ENCODE measurements at regions of chrX and their contacts with region 1.

Region 1: DNA sequence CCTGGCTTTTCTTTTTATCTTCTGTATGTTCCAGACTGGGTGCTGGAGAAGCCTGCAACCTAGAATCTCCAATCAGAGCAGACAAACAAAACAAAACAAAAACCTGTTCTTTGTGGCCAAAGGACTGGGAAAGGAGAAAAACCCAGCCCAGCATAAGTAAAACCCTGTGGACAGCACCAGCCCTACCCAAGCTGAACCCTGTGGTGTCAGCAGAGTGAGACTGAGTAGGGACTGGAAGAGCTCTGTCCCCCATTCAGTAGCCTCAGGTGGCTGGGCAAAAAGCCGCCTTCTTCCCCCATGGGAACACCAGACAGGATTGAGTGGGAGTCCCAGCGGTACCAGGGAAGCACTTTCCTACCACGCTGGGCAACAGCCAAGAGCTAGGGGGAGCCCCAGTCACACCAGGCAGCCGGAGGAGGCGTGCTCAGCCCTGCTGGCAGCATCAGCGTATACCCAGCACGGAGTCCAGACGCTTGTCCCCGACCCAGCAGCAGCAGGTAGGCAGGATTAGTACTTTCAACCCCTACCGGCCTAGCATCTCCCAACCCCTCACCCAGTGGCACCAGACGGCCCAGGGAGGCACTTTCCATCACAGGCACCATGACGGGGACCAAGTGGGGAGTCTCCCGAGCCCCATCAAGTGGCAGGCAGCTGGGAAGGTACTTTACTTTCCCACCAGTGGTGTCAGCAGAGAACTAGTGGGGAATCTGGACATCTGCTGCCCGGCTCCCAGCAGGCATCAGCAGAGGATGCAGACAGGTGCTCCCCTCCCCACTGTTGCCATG is 8.6 kb upstream of the JADE3 start:
- DNase-seq: peak; percentile 80 to 83
- ATAC-seq: peak; percentile 100
- H3K4me3 ChIP-seq: peak overlapping the region; percentile 46
- H3K27ac ChIP-seq: peak overlapping the region; percentile 53 to 78; a peak in 3 of 6 replicates
- H3K4me1 ChIP-seq: 0 out of 3 replicates have a peak, but pooled peaks cover 5% of the 10 kb centered on the region
- CTCF ChIP-seq: peak; percentile 90
- EP300 ChIP-seq: no peak
- POLR2A ChIP-seq: no peak
- RAD21 ChIP-seq: peak; percentile 76 to 86

Region 2: GRCh38 chrX:46376246-46376885 is 527.3 kb before region 1 on chrX:
- CTCF ChIA-PET with region 1: no interaction called
- POLR2A ChIA-PET with region 1: no interaction called
- DNase-seq: peak; percentile 59 to 85
- ATAC-seq: peak; percentile 95 to 96
- H3K4me3 ChIP-seq: no peak overlapping the region
- H3K27ac ChIP-seq: peak overlapping the region; percentile 75 to 95
- H3K4me1 ChIP-seq: peaks cover 36% of the 10 kb centered on the region
- CTCF ChIP-seq: peak; percentile 73
- EP300 ChIP-seq: no peak
- POLR2A ChIP-seq: no peak
- RAD21 ChIP-seq: peak; percentile 90 to 95

Region 3: DNA sequence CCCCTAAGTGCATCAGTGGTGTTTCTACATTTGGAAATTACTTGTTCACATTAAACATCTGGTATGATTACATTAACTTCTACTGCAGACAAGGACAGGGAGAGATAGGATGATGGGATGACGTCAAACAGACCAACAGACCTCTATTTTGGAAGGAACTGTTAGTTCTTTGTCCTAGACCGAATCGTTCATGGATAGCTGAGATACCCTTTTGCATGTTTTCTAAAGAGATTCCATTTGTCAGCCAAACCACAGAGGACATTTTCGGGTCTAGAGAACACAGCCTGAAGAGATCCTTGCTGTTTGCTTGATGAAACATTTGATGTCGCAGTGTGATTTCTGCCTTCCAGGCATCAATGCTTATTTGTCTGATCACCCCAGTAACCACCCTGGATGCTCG is 302.4 kb before region 1 on chrX:
- CTCF ChIA-PET with region 1: no interaction called
- POLR2A ChIA-PET with region 1: no interaction called
- DNase-seq: no peak
- ATAC-seq: no peak
- H3K4me3 ChIP-seq: no peak overlapping the region
- H3K27ac ChIP-seq: no peak overlapping the region
- H3K4me1 ChIP-seq: peaks cover 5% of the 10 kb centered on the region; the same call in 1 of the 3 replicates
- CTCF ChIP-seq: no peak
- EP300 ChIP-seq: no peak
- POLR2A ChIP-seq: no peak
- RAD21 ChIP-seq: no peak

Region 4: GRCh38 chrX:46737473-46737872 is 166.2 kb before region 1 on chrX:
- CTCF ChIA-PET with region 1: no interaction called
- POLR2A ChIA-PET with region 1: no interaction called
- DNase-seq: no peak
- ATAC-seq: no peak
- H3K4me3 ChIP-seq: no peak overlapping the region
- H3K27ac ChIP-seq: no peak overlapping the region
- H3K4me1 ChIP-seq: no peaks in the 10 kb centered on the region
- CTCF ChIP-seq: no peak
- EP300 ChIP-seq: no peak
- POLR2A ChIP-seq: no peak
- RAD21 ChIP-seq: no peak

Region 5: DNA sequence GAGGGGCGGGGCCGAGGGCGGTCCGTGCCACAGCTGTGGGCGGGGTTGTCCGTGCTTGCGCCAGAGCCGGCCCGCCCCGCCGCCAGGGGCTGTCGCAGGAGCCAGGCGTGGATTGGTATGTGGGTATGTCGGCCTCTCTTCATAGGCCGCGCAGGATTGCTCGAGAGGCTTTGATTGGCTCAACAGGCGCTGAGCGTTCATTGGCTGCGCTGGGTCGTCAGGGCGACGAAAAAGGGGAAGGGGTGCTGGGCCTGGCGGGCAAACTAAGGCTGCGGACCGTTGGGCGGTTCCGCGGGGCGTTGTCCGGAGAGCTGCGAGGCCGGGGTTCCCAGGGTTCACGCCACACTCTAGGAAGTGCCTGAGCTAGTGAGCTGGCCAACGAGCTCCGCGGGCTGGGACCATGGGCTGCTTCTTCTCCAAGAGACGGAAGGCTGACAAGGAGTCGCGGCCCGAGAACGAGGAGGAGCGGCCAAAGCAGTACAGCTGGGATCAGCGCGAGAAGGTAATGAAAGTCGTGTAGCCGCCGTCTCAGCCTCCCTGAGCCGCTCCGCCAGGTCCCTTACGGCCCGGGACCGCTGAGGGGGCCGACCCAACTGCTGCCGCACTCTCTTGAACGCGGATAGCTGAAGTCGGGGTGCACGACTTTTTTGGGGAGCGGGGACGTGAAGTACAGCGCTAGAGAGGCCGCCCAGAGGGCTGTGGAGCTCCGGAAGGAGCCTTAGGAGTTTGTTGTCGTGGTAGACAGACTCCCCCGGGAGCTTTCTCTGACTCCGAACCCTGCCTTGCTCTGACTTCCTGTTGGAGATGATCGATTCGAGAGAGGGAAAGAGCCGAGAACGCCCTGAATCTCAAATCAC is 66.7 kb before region 1 on chrX and contains the start of gene RP2:
- CTCF ChIA-PET with region 1: interaction called, 11 read pairs
- POLR2A ChIA-PET with region 1: no interaction called
- DNase-seq: peak; percentile 78 to 96
- ATAC-seq: peak; percentile 99
- H3K4me3 ChIP-seq: peak within 1 kb of the TSS; percentile 74
- H3K27ac ChIP-seq: peak within 1 kb of the TSS; percentile 80 to 90
- H3K4me1 ChIP-seq: peaks cover 32% of the 10 kb centered on the region
- CTCF ChIP-seq: no peak
- EP300 ChIP-seq: no peak
- POLR2A ChIP-seq: peak; percentile 73
- RAD21 ChIP-seq: no peak
- polyA plus RNA-seq, gene RP2: 13.8 and 14.8 TPM in 2 replicates

Region 6: GRCh38 chrX:46873746-46874145 is 29.9 kb before region 1 on chrX:
- CTCF ChIA-PET with region 1: interaction called, 11 read pairs
- POLR2A ChIA-PET with region 1: no interaction called
- DNase-seq: no peak
- ATAC-seq: no peak
- H3K4me3 ChIP-seq: no peak overlapping the region
- H3K27ac ChIP-seq: no peak overlapping the region
- H3K4me1 ChIP-seq: peaks cover 8% of the 10 kb centered on the region
- CTCF ChIP-seq: no peak
- EP300 ChIP-seq: no peak
- POLR2A ChIP-seq: no peak
- RAD21 ChIP-seq: no peak

Region 7: DNA sequence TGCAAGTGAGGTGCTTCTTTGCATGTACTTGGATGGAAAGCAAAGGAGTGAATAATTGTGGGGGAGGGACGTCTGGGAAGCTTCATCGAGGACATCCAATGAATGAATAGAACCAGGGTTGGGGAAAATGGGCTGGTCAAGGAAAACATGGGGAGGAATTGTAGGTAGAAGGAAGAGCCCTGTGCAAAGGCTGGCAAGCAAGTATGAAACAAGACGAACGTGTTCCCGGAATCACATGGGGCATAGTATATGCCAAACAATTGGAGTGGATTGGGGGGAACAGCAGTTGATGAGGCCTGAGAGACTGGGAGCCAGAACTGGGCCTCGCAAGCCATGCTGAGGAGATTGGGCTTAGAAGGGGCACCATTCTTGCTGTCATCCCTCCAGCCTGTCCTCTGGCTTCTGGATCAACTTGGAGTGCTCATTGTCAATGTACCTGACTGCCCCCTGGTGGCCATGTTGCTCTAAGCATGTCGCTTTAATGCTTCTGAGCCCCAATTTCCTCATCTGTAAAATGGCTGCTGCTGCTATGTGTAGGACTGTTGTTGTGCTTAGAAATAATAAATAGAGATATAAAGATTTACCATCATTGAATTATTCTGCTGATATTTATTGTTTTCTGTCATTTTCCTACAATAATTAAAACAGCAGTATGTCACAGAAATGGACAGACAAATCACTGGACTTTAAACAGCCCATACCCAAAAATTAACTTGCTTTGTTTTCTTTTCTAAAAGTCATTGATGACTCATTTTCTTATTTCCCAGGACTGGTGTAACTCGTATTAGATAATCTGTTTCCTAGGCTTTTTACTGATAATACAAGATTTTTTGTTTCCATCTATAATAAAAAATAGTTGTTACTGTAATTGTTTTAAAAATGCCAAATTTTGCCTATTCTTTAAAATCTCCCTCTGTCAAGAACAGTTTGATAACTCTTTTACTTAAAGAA is 75.0 kb after region 1 on chrX:
- CTCF ChIA-PET with region 1: interaction called, 17 read pairs
- POLR2A ChIA-PET with region 1: no interaction called
- DNase-seq: peak; percentile 51 to 89
- ATAC-seq: peak; percentile 90 to 95
- H3K4me3 ChIP-seq: 0 out of 3 replicates have a peak overlapping the region, but pooled peaks have one; percentile 21
- H3K27ac ChIP-seq: peak overlapping the region; percentile 81 to 86
- H3K4me1 ChIP-seq: peaks cover 24% of the 10 kb centered on the region
- CTCF ChIP-seq: peak; percentile 65
- EP300 ChIP-seq: no peak
- POLR2A ChIP-seq: no peak
- RAD21 ChIP-seq: peak; percentile 63 to 69

Region 8: DNA sequence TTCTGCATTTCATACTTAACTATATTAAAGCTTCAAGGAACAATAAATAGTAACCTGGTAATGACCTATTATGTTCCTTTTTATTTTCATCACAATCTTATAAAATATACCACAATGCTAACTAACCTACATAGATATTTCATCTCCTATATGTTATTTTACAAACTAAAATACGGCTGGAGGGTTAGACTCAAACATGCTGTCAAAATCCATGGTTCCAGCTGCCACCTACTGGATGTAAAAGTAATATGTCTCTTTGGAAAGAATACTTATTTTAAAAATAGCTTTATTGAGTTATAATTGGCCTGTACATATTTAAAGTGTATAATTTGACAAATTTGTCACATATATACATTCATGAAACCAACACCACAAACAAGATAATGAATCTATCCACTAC is 189.6 kb after region 1 on chrX:
- CTCF ChIA-PET with region 1: interaction called, 10 read pairs
- POLR2A ChIA-PET with region 1: no interaction called
- DNase-seq: peak; percentile 35 to 38
- ATAC-seq: peak in 1 of 2 experiments; percentile 50; a peak in 3 of 6 replicates
- H3K4me3 ChIP-seq: no peak overlapping the region
- H3K27ac ChIP-seq: no peak overlapping the region
- H3K4me1 ChIP-seq: no peaks in the 10 kb centered on the region
- CTCF ChIP-seq: peak; percentile 66
- EP300 ChIP-seq: no peak
- POLR2A ChIP-seq: no peak
- RAD21 ChIP-seq: peak; percentile 70 to 76